Activated CD4-positive, alpha-beta T cell treated with anti-CD3 and anti-CD28 coated beads for 36 hours (primary cell): ENCODE measurements at regions of chr3 and their contacts with region 1.

Region 1: GRCh38 chr3:4804161-4805058 is 174.8 kb upstream of the BHLHE40 start:
- DNase-seq: peak; percentile 48
- ATAC-seq: no peak
- H3K4me3 Mint-ChIP-seq: peak overlapping the region; percentile 4
- H3K27ac Mint-ChIP-seq: peak overlapping the region; percentile 73
- H3K4me1 Mint-ChIP-seq: peaks cover 39% of the 10 kb centered on the region
- H3K27me3 Mint-ChIP-seq: no peaks in the 10 kb centered on the region

Region 2: GRCh38 chr3:4387210-4388204 is 416.9 kb before region 1 on chr3:
- CTCF ChIA-PET with region 1: no interaction called
- POLR2A ChIA-PET with region 1: no interaction called
- intact Hi-C with region 1: loop called in 1 of 2 experiments (anchors 1 kb)
- DNase-seq: no peak
- ATAC-seq: peak; percentile 91
- H3K4me3 Mint-ChIP-seq: peak overlapping the region; percentile 1
- H3K27ac Mint-ChIP-seq: peak overlapping the region; percentile 51
- H3K4me1 Mint-ChIP-seq: peaks cover 37% of the 10 kb centered on the region
- H3K27me3 Mint-ChIP-seq: no peaks in the 10 kb centered on the region

Region 3: GRCh38 chr3:4776980-4777581 is 27.3 kb before region 1 on chr3:
- CTCF ChIA-PET with region 1: interaction called, 9 read pairs
- POLR2A ChIA-PET with region 1: no interaction called
- intact Hi-C with region 1: loop called (anchors 1 kb)
- DNase-seq: peak; percentile 38
- ATAC-seq: peak; percentile 86
- H3K4me3 Mint-ChIP-seq: no peak overlapping the region
- H3K27ac Mint-ChIP-seq: peak overlapping the region; percentile 91
- H3K4me1 Mint-ChIP-seq: peaks cover 40% of the 10 kb centered on the region
- H3K27me3 Mint-ChIP-seq: no peaks in the 10 kb centered on the region

Region 4: DNA sequence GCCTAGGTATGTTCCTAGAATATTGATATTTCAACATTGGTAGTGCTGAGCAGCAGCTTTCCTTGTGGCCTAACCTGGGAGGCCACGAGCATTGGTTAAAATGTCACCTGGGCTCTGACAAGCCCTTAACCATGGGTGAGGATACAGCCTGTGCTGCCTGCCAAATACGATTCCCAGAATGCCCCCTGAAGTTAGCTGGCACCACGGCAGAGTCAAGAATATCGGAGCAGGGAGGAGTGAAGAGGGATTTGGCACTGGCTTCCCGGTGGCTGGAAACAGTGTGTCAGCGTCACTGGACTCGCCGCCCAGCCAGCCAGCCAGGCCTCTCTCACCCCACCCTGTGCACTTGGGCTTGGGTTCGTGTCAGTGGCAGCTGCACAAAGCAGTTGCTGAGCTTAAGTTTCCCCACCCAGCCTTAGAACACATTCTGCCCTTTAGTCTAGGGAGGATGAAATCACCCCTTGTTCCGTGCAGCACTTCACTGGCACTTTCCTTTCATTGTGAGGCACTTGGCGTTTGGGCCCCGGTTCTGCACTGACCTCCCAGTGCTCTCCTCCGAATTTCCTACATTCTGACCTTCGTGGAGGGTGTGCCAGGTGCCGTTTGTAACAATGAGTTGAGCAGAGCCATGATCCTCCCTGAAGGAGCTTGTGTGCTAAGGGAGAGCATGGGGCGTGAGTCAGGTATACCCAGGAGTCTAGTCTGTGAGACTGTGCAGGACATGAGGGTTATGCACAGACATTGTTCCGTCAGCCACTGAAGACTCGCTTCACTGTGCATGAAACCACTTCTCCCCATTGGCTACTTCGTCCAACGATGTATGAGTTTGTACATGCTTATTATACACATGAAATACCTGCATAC is 22.1 kb after region 1 on chr3:
- CTCF ChIA-PET with region 1: interaction called, 6 read pairs
- POLR2A ChIA-PET with region 1: interaction called, 3 read pairs
- intact Hi-C with region 1: loop called (anchors 1 kb)
- DNase-seq: no peak
- ATAC-seq: no peak
- H3K4me3 Mint-ChIP-seq: peak overlapping the region; percentile 62
- H3K27ac Mint-ChIP-seq: peak overlapping the region; percentile 87
- H3K4me1 Mint-ChIP-seq: peaks cover 95% of the 10 kb centered on the region
- H3K27me3 Mint-ChIP-seq: no peaks in the 10 kb centered on the region

Region 5: DNA sequence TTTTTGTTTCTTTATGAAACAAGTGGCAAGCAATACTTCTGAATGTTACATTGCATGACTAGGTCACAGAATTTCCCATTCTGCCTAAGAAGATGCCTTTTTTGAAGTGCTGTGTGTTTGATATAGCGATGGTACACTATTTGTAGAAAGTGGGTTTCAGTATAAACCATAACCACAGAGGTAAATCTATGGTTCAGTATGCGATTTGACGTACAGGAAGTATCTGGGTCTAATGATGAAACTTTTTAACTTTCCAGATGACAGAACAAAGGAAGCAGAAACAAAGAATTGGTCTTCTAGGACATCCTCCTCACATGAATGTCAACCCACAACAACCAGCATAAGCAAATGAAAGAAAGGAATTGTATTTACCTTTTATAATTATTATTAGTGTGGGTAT is 41.5 kb after region 1 on chr3:
- CTCF ChIA-PET with region 1: interaction called, 4 read pairs
- POLR2A ChIA-PET with region 1: interaction called, 14 read pairs
- intact Hi-C with region 1: loop called (anchors 1 kb)
- DNase-seq: no peak
- ATAC-seq: peak; percentile 58
- H3K4me3 Mint-ChIP-seq: peak overlapping the region; percentile 16
- H3K27ac Mint-ChIP-seq: peak overlapping the region; percentile 90
- H3K4me1 Mint-ChIP-seq: peaks cover 94% of the 10 kb centered on the region
- H3K27me3 Mint-ChIP-seq: no peaks in the 10 kb centered on the region